IMR-90 (cell line): ENCODE measurements at regions of chr11 and their contacts with region 1.

Region 1: GRCh38 chr11:130434521-130435223 is 6.3 kb upstream of the ADAMTS8 start:
- DNase-seq: peak; percentile 82
- ATAC-seq: peak; percentile 73
- H3K4me3 ChIP-seq: peak overlapping the region; percentile 51
- H3K27ac ChIP-seq: peak overlapping the region; percentile 77
- H3K4me1 ChIP-seq: peaks cover 9% of the 10 kb centered on the region
- H3K27me3 ChIP-seq: peaks cover 9% of the 10 kb centered on the region
- CTCF ChIP-seq: peak; percentile 88
- POLR2A ChIP-seq: no peak
- RAD21 ChIP-seq: peak; percentile 93

Region 2: GRCh38 chr11:130213143-130213978 is 221.3 kb before region 1 on chr11:
- CTCF ChIA-PET with region 1: interaction called, 6 read pairs
- POLR2A ChIA-PET with region 1: no interaction called
- dilution Hi-C with region 1: no loop called
- in situ Hi-C with region 1: loop called (anchors 5 kb)
- intact Hi-C with region 1: loop called (anchors 1 kb)
- DNase-seq: peak; percentile 6
- ATAC-seq: peak; percentile 96
- H3K4me3 ChIP-seq: no peak overlapping the region
- H3K27ac ChIP-seq: no peak overlapping the region
- H3K4me1 ChIP-seq: no peaks in the 10 kb centered on the region
- H3K27me3 ChIP-seq: peaks cover 46% of the 10 kb centered on the region
- CTCF ChIP-seq: peak; percentile 87
- POLR2A ChIP-seq: no peak
- RAD21 ChIP-seq: peak; percentile 91

Region 3: GRCh38 chr11:130359419-130359818 is 75.3 kb before region 1 on chr11:
- CTCF ChIA-PET with region 1: no interaction called
- POLR2A ChIA-PET with region 1: no interaction called
- dilution Hi-C with region 1: no loop called
- in situ Hi-C with region 1: no loop called
- intact Hi-C with region 1: no loop called
- DNase-seq: no peak
- ATAC-seq: no peak
- H3K4me3 ChIP-seq: no peak overlapping the region
- H3K27ac ChIP-seq: no peak overlapping the region
- H3K4me1 ChIP-seq: no peaks in the 10 kb centered on the region
- H3K27me3 ChIP-seq: peaks cover 10% of the 10 kb centered on the region; the same call in 1 of the 2 replicates
- CTCF ChIP-seq: no peak
- POLR2A ChIP-seq: no peak
- RAD21 ChIP-seq: no peak

Region 4: DNA sequence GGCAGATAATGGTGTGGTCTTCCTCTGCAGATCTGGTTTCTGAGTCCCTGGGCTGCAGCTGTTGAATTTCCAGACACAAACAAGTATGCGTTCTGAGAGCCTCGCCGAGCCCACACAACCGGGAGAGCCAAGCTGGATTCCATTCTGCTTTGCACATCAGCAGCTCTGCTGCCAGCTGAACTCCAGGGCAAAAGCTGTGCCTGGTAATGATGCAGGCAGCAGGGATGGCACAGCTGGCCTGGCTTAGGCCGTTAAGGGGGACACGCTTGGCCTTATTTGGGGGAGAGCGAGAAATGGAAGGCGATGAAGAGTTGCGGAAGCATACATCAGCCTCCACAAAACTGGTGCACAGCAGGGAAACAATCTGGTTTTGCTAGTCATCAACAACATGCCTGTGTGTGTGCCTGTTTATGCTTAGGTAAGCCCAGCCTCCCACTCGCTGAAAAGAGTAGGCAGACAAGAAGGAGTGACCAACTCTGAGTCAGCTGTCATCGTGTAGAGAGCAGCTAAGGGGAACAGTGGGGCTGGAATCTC is 31.3 kb before region 1 on chr11:
- CTCF ChIA-PET with region 1: no interaction called
- POLR2A ChIA-PET with region 1: no interaction called
- dilution Hi-C with region 1: no loop called
- in situ Hi-C with region 1: no loop called
- intact Hi-C with region 1: no loop called
- DNase-seq: peak; percentile 97
- ATAC-seq: peak; percentile 89
- H3K4me3 ChIP-seq: peak overlapping the region; percentile 4; the same call in 1 of the 2 replicates
- H3K27ac ChIP-seq: peak overlapping the region; percentile 96
- H3K4me1 ChIP-seq: peaks cover 34% of the 10 kb centered on the region
- H3K27me3 ChIP-seq: no peaks in the 10 kb centered on the region
- CTCF ChIP-seq: no peak
- POLR2A ChIP-seq: no peak
- RAD21 ChIP-seq: no peak

Region 5: DNA sequence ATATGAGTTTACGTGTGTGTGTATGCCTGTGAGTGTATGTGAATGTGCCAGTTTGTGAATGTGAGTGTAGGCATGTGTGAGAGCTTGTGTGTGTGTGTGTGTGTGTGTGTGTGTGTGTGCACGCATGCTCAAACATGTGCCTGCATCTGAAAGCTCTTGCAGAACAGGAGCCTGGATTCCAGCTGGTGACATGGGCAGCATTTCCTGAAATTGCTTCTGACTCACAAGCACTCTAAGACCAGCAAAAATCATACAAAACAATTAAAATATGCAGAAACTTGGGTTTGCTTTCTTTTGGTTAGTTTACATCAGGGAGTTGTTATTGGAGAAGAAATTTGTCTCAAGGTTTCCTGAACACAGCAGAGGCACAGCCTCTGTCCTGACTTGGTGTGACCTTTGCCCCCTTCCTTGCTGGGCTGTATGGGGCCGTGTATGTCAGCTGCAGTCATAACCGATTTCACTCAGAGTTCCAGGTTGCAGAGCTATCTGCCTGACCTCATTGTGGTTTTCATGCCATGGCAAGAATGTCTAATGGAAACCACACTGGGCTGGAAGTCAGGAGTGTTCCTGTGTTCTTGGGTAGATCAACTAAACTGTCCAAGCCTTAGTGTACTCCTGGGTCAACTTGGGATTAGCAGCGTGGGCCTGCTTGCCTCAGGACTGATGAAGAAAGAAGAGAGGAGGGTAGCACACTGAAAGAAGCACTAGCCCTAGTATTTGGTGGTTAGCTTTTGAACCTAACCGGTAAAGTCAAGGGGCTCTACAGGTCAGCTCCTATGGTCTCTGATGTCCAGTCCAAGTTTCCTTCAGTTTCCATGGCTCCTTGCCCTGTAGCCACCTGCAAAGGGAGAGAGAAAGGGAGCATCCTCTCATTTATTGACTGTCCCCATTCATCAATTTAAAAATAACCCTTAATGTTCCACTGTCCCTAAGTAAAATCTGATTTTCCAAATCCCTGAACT is 337.9 kb after region 1 on chr11:
- CTCF ChIA-PET with region 1: no interaction called
- POLR2A ChIA-PET with region 1: no interaction called
- dilution Hi-C with region 1: no loop called
- in situ Hi-C with region 1: no loop called
- intact Hi-C with region 1: loop called (anchors 2 kb)
- DNase-seq: peak; percentile 97
- ATAC-seq: peak; percentile 89
- H3K4me3 ChIP-seq: no peak overlapping the region
- H3K27ac ChIP-seq: peak overlapping the region; percentile 77; the same call in 1 of the 2 replicates
- H3K4me1 ChIP-seq: peaks cover 22% of the 10 kb centered on the region
- H3K27me3 ChIP-seq: no peaks in the 10 kb centered on the region
- CTCF ChIP-seq: no peak
- POLR2A ChIP-seq: no peak
- RAD21 ChIP-seq: no peak; the same call in 1 of the 2 replicates

Region 6: GRCh38 chr11:130847517-130847916 is 412.8 kb after region 1 on chr11:
- CTCF ChIA-PET with region 1: interaction called, 10 read pairs
- POLR2A ChIA-PET with region 1: no interaction called
- dilution Hi-C with region 1: loop called (anchors 25 kb)
- in situ Hi-C with region 1: loop called (anchors 5 kb)
- intact Hi-C with region 1: no loop called
- DNase-seq: peak; percentile 87
- ATAC-seq: peak; percentile 79
- H3K4me3 ChIP-seq: peak overlapping the region; percentile 26; the same call in 1 of the 2 replicates
- H3K27ac ChIP-seq: no peak overlapping the region; the same call in 1 of the 2 replicates
- H3K4me1 ChIP-seq: peaks cover 12% of the 10 kb centered on the region
- H3K27me3 ChIP-seq: no peaks in the 10 kb centered on the region
- CTCF ChIP-seq: no peak
- POLR2A ChIP-seq: no peak
- RAD21 ChIP-seq: no peak

Region 7: GRCh38 chr11:130861902-130862860 is 427.5 kb after region 1 on chr11:
- CTCF ChIA-PET with region 1: interaction called, 95 read pairs
- POLR2A ChIA-PET with region 1: no interaction called
- dilution Hi-C with region 1: loop called (anchors 25 kb)
- in situ Hi-C with region 1: no loop called
- intact Hi-C with region 1: loop called (anchors 1 kb)
- DNase-seq: peak; percentile 93
- ATAC-seq: peak; percentile 87
- H3K4me3 ChIP-seq: no peak overlapping the region
- H3K27ac ChIP-seq: no peak overlapping the region
- H3K4me1 ChIP-seq: peaks cover 4% of the 10 kb centered on the region; the same call in 1 of the 2 replicates
- H3K27me3 ChIP-seq: no peaks in the 10 kb centered on the region
- CTCF ChIP-seq: peak; percentile 100; the same call in 1 of the 2 replicates
- POLR2A ChIP-seq: peak; percentile 71
- RAD21 ChIP-seq: peak; percentile 100

Region 8: GRCh38 chr11:130909650-130910049 is 475.0 kb after region 1 on chr11:
- CTCF ChIA-PET with region 1: no interaction called
- POLR2A ChIA-PET with region 1: no interaction called
- dilution Hi-C with region 1: no loop called
- in situ Hi-C with region 1: no loop called
- intact Hi-C with region 1: loop called (anchors 5 kb)
- DNase-seq: peak; percentile 91
- ATAC-seq: peak; percentile 29; the same call in 1 of the 2 replicates
- H3K4me3 ChIP-seq: no peak overlapping the region
- H3K27ac ChIP-seq: peak overlapping the region; percentile 90; the same call in 1 of the 2 replicates
- H3K4me1 ChIP-seq: peaks cover 16% of the 10 kb centered on the region
- H3K27me3 ChIP-seq: no peaks in the 10 kb centered on the region
- CTCF ChIP-seq: no peak
- POLR2A ChIP-seq: no peak
- RAD21 ChIP-seq: no peak